CD14-positive monocyte (primary cell): ENCODE measurements at regions of chr1 and their contacts with region 1.

Region 1: GRCh38 chr1:219587805-219588561 is 24.9 kb downstream of the ZC3H11B start:
- DNase-seq: peak; percentile 73 to 87 (median 87)
- H3K4me3 ChIP-seq: peak overlapping the region in 2 of 3 experiments; percentile 3 to 42
- H3K4me3 Mint-ChIP-seq: peak overlapping the region in 1 of 2 donors; percentile 80
- H3K27ac ChIP-seq: peak overlapping the region; percentile 30 to 89
- H3K27ac Mint-ChIP-seq: peak overlapping the region; percentile 88 to 98 (median 95)
- H3K4me1 ChIP-seq: peaks cover 53 to 56% of the 10 kb centered on the region in 2 donors
- H3K4me1 Mint-ChIP-seq: peaks cover 57% of the 10 kb centered on the region
- H3K27me3 ChIP-seq: no peaks in the 10 kb centered on the region
- H3K27me3 Mint-ChIP-seq: no peaks in the 10 kb centered on the region
- CTCF ChIP-seq: no peak

Region 2: GRCh38 chr1:219460896-219461815 is 126.8 kb before region 1 on chr1:
- intact Hi-C with region 1: loop called in 1 of 2 experiments (anchors 5 kb)
- DNase-seq: peak; percentile 84 to 91 (median 90)
- H3K4me3 ChIP-seq: peak overlapping the region in 1 of 3 experiments; percentile 24
- H3K4me3 Mint-ChIP-seq: peak overlapping the region; percentile 22 to 31
- H3K27ac ChIP-seq: peak overlapping the region; percentile 78 to 96
- H3K27ac Mint-ChIP-seq: peak overlapping the region; percentile 86 to 98 (median 97)
- H3K4me1 ChIP-seq: peaks cover 57 to 61% of the 10 kb centered on the region in 2 donors
- H3K4me1 Mint-ChIP-seq: peaks cover 51% of the 10 kb centered on the region
- H3K27me3 ChIP-seq: no peaks in the 10 kb centered on the region
- H3K27me3 Mint-ChIP-seq: peaks cover 0 to 3% (median 2%) of the 10 kb centered on the region in 3 donors
- CTCF ChIP-seq: no peak